ENCODE measurements at regions of chr13 and their contacts with region 1.

Region 1: GRCh38 chr13:112572366-112572765 is 15.6 kb downstream of the TUBGCP3 start:
- DNase-seq: no peak
- H3K4me3 Mint-ChIP-seq: no peak overlapping the region
- H3K27ac Mint-ChIP-seq: no peak overlapping the region
- H3K4me1 Mint-ChIP-seq: peaks cover 46% of the 10 kb centered on the region
- H3K27me3 Mint-ChIP-seq: no peaks in the 10 kb centered on the region

Region 2: DNA sequence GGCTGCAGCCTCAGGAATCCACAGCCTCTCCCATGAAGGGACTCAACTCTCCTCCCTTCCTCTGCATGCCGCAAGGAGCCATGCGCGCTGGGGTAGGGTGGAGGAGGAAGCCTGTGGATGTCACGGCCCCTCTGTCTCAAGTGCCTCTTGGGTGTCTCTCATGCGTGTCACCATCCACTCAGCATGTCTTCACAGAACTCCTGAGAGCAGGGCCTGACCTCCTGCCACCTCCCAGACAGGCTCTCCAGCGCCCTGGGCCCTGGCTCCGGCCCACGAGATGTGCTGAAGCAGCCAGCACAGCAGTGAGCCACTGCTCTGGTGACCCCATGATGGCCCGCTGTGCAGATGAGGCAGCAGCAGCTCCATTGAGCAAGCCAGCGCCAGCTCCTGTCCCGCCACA is 222.1 kb before region 1 on chr13:
- intact Hi-C with region 1: no loop called
- DNase-seq: no peak
- H3K4me3 Mint-ChIP-seq: no peak overlapping the region
- H3K27ac Mint-ChIP-seq: no peak overlapping the region
- H3K4me1 Mint-ChIP-seq: no peaks in the 10 kb centered on the region
- H3K27me3 Mint-ChIP-seq: peaks cover 25% of the 10 kb centered on the region

Region 3: GRCh38 chr13:112587212-112587763 is 14.9 kb after region 1 on chr13:
- intact Hi-C with region 1: loop called (anchors 2 kb)
- DNase-seq: peak; percentile 56
- H3K4me3 Mint-ChIP-seq: peak overlapping the region; percentile 98
- H3K27ac Mint-ChIP-seq: peak overlapping the region; percentile 93
- H3K4me1 Mint-ChIP-seq: peaks cover 28% of the 10 kb centered on the region
- H3K27me3 Mint-ChIP-seq: no peaks in the 10 kb centered on the region

Region 4: GRCh38 chr13:112725346-112726015 is 153.1 kb after region 1 on chr13:
- intact Hi-C with region 1: no loop called
- DNase-seq: no peak
- H3K4me3 Mint-ChIP-seq: no peak overlapping the region
- H3K27ac Mint-ChIP-seq: peak overlapping the region; percentile 55
- H3K4me1 Mint-ChIP-seq: peaks cover 15% of the 10 kb centered on the region
- H3K27me3 Mint-ChIP-seq: no peaks in the 10 kb centered on the region